CD8-positive, alpha-beta T cell (primary cell): ENCODE measurements at regions of chr15 and their contacts with region 1.

Region 1: GRCh38 chr15:39782441-39783138 is at the start of gene FSIP1:
- DNase-seq: peak; percentile 91 to 97 (median 94)
- ATAC-seq: peak; percentile 98
- H3K4me3 ChIP-seq: peak within 1 kb of the TSS; percentile 71 to 95
- H3K4me3 Mint-ChIP-seq: peak within 1 kb of the TSS; percentile 85
- H3K27ac ChIP-seq: peak within 1 kb of the TSS; percentile 68 to 82
- H3K27ac Mint-ChIP-seq: peak within 1 kb of the TSS; percentile 87
- H3K4me1 ChIP-seq: peaks cover 20% of the 10 kb centered on the region
- H3K4me1 Mint-ChIP-seq: peaks cover 50% of the 10 kb centered on the region
- H3K27me3 ChIP-seq: no peaks in the 10 kb centered on the region
- H3K27me3 Mint-ChIP-seq: no peaks in the 10 kb centered on the region
- CTCF ChIP-seq: no peak
- total RNA-seq, gene FSIP1: 0.22 to 0.64 TPM

Region 2: GRCh38 chr15:38252481-38253412 is 1529.8 kb before region 1 on chr15 and contains the start of gene SPRED1:
- CTCF ChIA-PET with region 1: no interaction called
- POLR2A ChIA-PET with region 1: no interaction called
- intact Hi-C with region 1: loop called in 1 of 2 experiments (anchors 5 kb)
- DNase-seq: peak in 7 of 9 experiments; percentile 1 to 50 (median 32)
- ATAC-seq: peak; percentile 13
- H3K4me3 ChIP-seq: peak within 1 kb of the TSS; percentile 75 to 85
- H3K4me3 Mint-ChIP-seq: peak within 1 kb of the TSS; percentile 84
- H3K27ac ChIP-seq: no peak within 1 kb of the TSS
- H3K27ac Mint-ChIP-seq: no peak within 1 kb of the TSS
- H3K4me1 ChIP-seq: peaks cover 21% of the 10 kb centered on the region
- H3K4me1 Mint-ChIP-seq: peaks cover 26% of the 10 kb centered on the region
- H3K27me3 ChIP-seq: no peaks in the 10 kb centered on the region
- H3K27me3 Mint-ChIP-seq: peaks cover 10% of the 10 kb centered on the region
- CTCF ChIP-seq: no peak
- total RNA-seq, gene SPRED1: 0.05 to 0.50 TPM

Region 3: GRCh38 chr15:38647683-38648082 is 1134.9 kb before region 1 on chr15:
- CTCF ChIA-PET with region 1: no interaction called
- POLR2A ChIA-PET with region 1: no interaction called
- intact Hi-C with region 1: loop called in 1 of 2 experiments (anchors 5 kb)
- DNase-seq: no peak
- ATAC-seq: no peak
- H3K4me3 ChIP-seq: no peak overlapping the region
- H3K4me3 Mint-ChIP-seq: peak overlapping the region; percentile 53
- H3K27ac ChIP-seq: no peak overlapping the region
- H3K27ac Mint-ChIP-seq: peak overlapping the region; percentile 96
- H3K4me1 ChIP-seq: peaks cover 79% of the 10 kb centered on the region
- H3K4me1 Mint-ChIP-seq: peaks cover 85% of the 10 kb centered on the region
- H3K27me3 ChIP-seq: no peaks in the 10 kb centered on the region
- H3K27me3 Mint-ChIP-seq: no peaks in the 10 kb centered on the region
- CTCF ChIP-seq: no peak

Region 4: DNA sequence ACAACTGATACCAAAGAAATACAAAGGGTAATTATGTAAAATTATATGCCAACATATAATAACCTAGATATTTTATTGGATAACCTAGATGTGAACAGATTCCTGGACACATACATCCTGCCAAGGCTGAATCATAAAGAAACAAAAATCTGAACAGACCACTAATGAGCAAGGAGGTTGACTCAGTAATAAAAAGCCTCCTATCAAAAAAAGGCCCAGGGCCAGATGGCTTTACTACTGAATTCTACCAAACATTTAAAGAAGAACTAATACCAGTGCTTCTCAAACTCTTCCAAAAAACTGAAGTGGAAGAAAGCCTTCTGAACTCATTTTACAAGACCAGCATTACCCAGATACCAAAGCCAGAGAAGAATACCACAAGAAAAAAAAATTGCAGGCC is 169.3 kb before region 1 on chr15:
- CTCF ChIA-PET with region 1: no interaction called
- POLR2A ChIA-PET with region 1: no interaction called
- intact Hi-C with region 1: no loop called
- DNase-seq: no peak
- ATAC-seq: no peak
- H3K4me3 ChIP-seq: no peak overlapping the region
- H3K4me3 Mint-ChIP-seq: no peak overlapping the region
- H3K27ac ChIP-seq: no peak overlapping the region
- H3K27ac Mint-ChIP-seq: no peak overlapping the region
- H3K4me1 ChIP-seq: peaks cover 4% of the 10 kb centered on the region
- H3K4me1 Mint-ChIP-seq: peaks cover under 1% of the 10 kb centered on the region
- H3K27me3 ChIP-seq: no peaks in the 10 kb centered on the region
- H3K27me3 Mint-ChIP-seq: no peaks in the 10 kb centered on the region
- CTCF ChIP-seq: no peak

Region 5: DNA sequence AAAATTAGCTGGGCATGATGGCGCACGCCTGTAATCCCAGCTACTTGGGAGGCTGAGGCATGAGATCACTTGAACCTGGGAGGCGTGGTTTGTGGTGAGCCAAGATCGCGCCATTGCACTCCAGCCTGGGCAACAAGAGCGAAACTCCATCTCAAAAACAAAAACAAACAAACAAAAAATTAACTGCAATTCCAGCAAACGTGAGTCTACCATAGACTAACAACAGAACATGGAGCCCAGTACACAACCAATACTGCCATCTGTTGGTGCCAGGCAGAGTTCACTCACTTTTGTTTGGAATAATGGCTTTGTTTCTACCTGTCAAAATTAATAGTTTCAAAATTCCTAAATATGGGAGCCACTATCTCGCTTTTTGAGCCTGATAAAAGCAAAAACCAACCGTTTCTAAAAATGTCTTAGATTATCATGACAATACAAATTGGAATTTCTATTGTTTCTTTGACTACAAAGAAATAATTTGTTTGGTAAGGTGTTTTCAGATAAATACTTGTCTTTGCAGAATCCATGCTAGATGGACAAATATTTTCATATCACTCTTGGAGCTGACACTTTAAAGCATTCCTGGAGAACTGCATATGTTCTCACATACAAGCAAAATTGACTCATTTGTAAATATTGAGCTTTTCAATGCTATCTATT is 92.4 kb after region 1 on chr15:
- CTCF ChIA-PET with region 1: interaction called, 4 read pairs
- POLR2A ChIA-PET with region 1: no interaction called
- intact Hi-C with region 1: loop called in 1 of 2 experiments (anchors 1 kb)
- DNase-seq: peak in 2 of 9 experiments; percentile 36 to 51
- ATAC-seq: no peak
- H3K4me3 ChIP-seq: no peak overlapping the region
- H3K4me3 Mint-ChIP-seq: no peak overlapping the region
- H3K27ac ChIP-seq: no peak overlapping the region
- H3K27ac Mint-ChIP-seq: no peak overlapping the region
- H3K4me1 ChIP-seq: no peaks in the 10 kb centered on the region
- H3K4me1 Mint-ChIP-seq: no peaks in the 10 kb centered on the region
- H3K27me3 ChIP-seq: no peaks in the 10 kb centered on the region
- H3K27me3 Mint-ChIP-seq: peaks cover 2% of the 10 kb centered on the region
- CTCF ChIP-seq: peak; percentile 53

Region 6: GRCh38 chr15:39934397-39935071 is 151.9 kb after region 1 on chr15:
- CTCF ChIA-PET with region 1: no interaction called
- POLR2A ChIA-PET with region 1: no interaction called
- intact Hi-C with region 1: loop called (anchors 1 to 2 kb)
- DNase-seq: peak in 1 of 9 experiments; percentile 30
- ATAC-seq: no peak
- H3K4me3 ChIP-seq: peak overlapping the region; percentile 79 to 82
- H3K4me3 Mint-ChIP-seq: peak overlapping the region; percentile 83
- H3K27ac ChIP-seq: peak overlapping the region in 1 of 2 experiments; percentile 47
- H3K27ac Mint-ChIP-seq: peak overlapping the region; percentile 5
- H3K4me1 ChIP-seq: peaks cover 7% of the 10 kb centered on the region
- H3K4me1 Mint-ChIP-seq: peaks cover 34% of the 10 kb centered on the region
- H3K27me3 ChIP-seq: no peaks in the 10 kb centered on the region
- H3K27me3 Mint-ChIP-seq: peaks cover 2% of the 10 kb centered on the region
- CTCF ChIP-seq: no peak

Region 7: DNA sequence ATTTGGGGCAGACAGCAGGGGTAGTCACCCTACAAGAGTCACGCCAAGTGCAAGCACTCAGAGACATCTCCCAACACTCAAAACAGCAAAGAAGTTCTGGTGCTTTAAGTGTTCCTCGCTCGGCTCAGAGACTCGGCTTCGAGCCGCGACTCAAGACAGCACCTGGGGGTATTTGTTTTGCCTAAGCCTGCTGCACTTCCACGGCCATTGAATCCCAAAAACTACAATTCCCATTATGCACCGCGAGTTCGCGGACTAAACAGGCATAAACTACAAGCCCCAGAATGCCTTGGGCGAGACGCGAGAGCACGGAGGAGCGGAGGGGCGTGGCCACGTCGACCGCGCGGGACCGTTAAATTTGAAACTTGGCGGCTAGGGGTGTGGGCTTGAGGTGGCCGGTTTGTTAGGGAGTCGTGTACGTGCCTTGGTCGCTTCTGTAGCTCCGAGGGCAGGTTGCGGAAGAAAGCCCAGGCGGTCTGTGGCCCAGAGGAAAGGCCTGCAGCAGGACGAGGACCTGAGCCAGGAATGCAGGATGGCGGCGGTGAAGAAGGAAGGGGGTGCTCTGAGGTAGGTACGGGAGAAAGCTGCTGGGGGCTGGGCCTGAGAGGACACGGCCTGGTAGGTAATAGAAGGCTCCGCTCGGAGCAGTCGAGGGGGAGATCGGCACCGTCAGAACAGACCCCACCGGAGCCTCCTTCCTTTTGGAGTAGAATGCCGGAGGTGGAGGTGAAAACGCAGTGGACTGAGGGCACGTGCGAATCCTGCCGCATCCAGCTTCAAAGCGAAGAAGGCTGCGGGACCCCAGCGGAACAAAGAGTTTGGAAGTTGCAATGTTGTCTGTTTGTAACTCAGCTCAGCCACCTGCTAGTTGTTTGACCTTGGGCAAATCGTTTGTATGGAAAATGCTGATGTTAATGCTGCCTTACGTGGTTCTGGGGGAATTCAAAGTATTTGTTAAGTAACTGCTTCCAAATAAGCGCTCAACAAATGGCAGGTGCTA is 378.4 kb after region 1 on chr15 and contains the start of gene BUB1B:
- CTCF ChIA-PET with region 1: no interaction called
- POLR2A ChIA-PET with region 1: no interaction called
- intact Hi-C with region 1: loop called (anchors 1 to 2 kb)
- DNase-seq: peak; percentile 82 to 96 (median 91)
- ATAC-seq: peak; percentile 98
- H3K4me3 ChIP-seq: peak within 1 kb of the TSS; percentile 61 to 71
- H3K4me3 Mint-ChIP-seq: no peak within 1 kb of the TSS
- H3K27ac ChIP-seq: no peak within 1 kb of the TSS
- H3K27ac Mint-ChIP-seq: no peak within 1 kb of the TSS
- H3K4me1 ChIP-seq: peaks cover 10% of the 10 kb centered on the region
- H3K4me1 Mint-ChIP-seq: no peaks in the 10 kb centered on the region
- H3K27me3 ChIP-seq: no peaks in the 10 kb centered on the region
- H3K27me3 Mint-ChIP-seq: no peaks in the 10 kb centered on the region
- CTCF ChIP-seq: no peak
- total RNA-seq, gene BUB1B: 0.47 to 1.2 TPM

Region 8: GRCh38 chr15:40440743-40441564 is 658.4 kb after region 1 on chr15 and contains the start of gene BAHD1:
- CTCF ChIA-PET with region 1: no interaction called
- POLR2A ChIA-PET with region 1: no interaction called
- intact Hi-C with region 1: loop called in 1 of 2 experiments (anchors 10 kb)
- DNase-seq: peak; percentile 86 to 97 (median 95)
- ATAC-seq: peak; percentile 85
- H3K4me3 ChIP-seq: peak within 1 kb of the TSS; percentile 57 to 60
- H3K4me3 Mint-ChIP-seq: peak within 1 kb of the TSS; percentile 91
- H3K27ac ChIP-seq: peak within 1 kb of the TSS in 1 of 2 experiments; percentile 53
- H3K27ac Mint-ChIP-seq: peak within 1 kb of the TSS; percentile 75
- H3K4me1 ChIP-seq: peaks cover 57% of the 10 kb centered on the region
- H3K4me1 Mint-ChIP-seq: peaks cover 58% of the 10 kb centered on the region
- H3K27me3 ChIP-seq: peaks cover 10 to 13% of the 10 kb centered on the region in 2 experiments
- H3K27me3 Mint-ChIP-seq: peaks cover 12% of the 10 kb centered on the region
- CTCF ChIP-seq: no peak
- total RNA-seq, gene BAHD1: 22.2 to 23.7 TPM